Common myeloid progenitor, CD34-positive (primary cell): ENCODE measurements at regions of chr1 and their contacts with region 1.

Region 1: GRCh38 chr1:180482425-180483275 is 19.7 kb downstream of the ACBD6 start:
- DNase-seq: peak; percentile 54 to 77 (median 66)
- H3K4me3 ChIP-seq: peak overlapping the region in 2 of 7 experiments; percentile 8 to 14
- H3K27ac ChIP-seq: peak overlapping the region in 1 of 2 experiments; percentile 34
- H3K4me1 ChIP-seq: peaks cover 0 to 3% (median 1%) of the 10 kb centered on the region in 4 experiments
- H3K27me3 ChIP-seq: no peaks in the 10 kb centered on the region

Region 2: DNA sequence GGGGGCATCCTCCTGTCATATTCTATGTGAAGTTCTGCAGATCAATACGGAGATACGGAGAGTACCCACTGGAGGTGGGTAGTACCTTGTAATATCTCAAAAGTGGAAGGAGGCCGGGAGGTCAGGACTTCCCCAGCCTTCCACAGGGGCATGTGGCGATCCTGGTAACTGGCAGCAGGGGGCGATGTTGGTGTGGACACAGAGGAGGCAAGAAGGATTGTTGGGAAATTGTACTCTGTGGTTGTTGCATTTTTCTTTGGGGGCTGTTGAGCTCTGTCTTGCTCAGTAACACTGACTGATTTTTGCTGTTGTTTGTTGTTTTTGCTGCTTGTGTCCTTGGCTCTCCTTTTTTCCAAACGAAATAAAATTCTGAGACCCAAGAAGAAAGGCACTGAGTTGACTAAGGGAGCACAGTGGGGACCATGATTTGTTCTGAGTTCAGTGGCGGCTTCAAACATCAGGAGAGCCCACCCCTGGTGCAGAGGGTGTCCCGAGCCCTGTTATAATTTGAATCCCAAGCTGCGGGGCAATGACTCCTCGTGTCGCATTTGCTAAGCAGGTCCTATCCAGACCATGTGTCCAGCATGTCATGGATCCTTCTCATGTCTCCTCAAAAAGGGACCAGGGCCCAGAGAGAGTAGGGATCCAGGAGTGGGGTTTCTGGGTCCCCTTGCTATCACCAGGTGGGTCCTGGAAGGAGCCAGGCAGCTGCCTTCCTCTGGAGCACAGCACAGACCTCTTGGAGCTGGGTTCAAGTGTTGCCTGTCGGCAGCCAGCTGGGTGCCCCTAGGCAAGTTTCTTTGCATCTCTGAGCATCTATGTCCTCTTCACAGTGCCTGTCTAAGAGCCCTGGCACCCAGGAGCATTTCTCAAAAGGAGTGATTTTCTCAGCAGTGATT is 229.8 kb before region 1 on chr1:
- CTCF ChIA-PET with region 1: interaction called, 21 read pairs
- POLR2A ChIA-PET with region 1: no interaction called
- DNase-seq: peak; percentile 59 to 80 (median 75)
- H3K4me3 ChIP-seq: no peak overlapping the region
- H3K27ac ChIP-seq: no peak overlapping the region
- H3K4me1 ChIP-seq: no peaks in the 10 kb centered on the region
- H3K27me3 ChIP-seq: peaks cover 0 to 7% (median 0%) of the 10 kb centered on the region in 5 experiments

Region 3: DNA sequence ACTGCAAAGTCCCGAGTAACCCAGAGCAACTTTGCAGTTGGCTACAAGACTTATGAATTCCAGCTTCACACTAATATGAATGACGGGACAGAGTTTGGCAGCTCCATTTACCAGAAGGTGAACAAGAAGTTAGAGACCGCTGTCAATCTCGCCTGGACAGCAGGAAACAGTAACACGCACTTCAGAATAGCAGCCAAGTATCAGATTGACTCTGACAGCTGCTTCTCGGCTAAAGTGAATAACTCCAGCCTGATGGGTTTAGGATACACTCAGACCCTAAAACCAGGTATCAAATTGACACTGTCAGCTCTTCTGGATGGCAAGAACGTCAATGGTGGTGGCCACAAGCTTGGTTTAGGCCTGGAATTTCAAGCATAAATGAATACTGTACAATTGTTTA is 47.1 kb before region 1 on chr1:
- CTCF ChIA-PET with region 1: no interaction called
- POLR2A ChIA-PET with region 1: no interaction called
- DNase-seq: no peak
- H3K4me3 ChIP-seq: no peak overlapping the region
- H3K27ac ChIP-seq: no peak overlapping the region
- H3K4me1 ChIP-seq: no peaks in the 10 kb centered on the region
- H3K27me3 ChIP-seq: no peaks in the 10 kb centered on the region

Region 4: GRCh38 chr1:180494370-180494769 is 11.7 kb after region 1 on chr1:
- CTCF ChIA-PET with region 1: interaction called, 11 read pairs
- POLR2A ChIA-PET with region 1: no interaction called
- DNase-seq: peak; percentile 38 to 86 (median 80)
- H3K4me3 ChIP-seq: peak overlapping the region in 1 of 7 experiments; percentile 15
- H3K27ac ChIP-seq: no peak overlapping the region
- H3K4me1 ChIP-seq: peaks cover 0 to 10% (median 5%) of the 10 kb centered on the region in 4 experiments
- H3K27me3 ChIP-seq: no peaks in the 10 kb centered on the region

Region 5: DNA sequence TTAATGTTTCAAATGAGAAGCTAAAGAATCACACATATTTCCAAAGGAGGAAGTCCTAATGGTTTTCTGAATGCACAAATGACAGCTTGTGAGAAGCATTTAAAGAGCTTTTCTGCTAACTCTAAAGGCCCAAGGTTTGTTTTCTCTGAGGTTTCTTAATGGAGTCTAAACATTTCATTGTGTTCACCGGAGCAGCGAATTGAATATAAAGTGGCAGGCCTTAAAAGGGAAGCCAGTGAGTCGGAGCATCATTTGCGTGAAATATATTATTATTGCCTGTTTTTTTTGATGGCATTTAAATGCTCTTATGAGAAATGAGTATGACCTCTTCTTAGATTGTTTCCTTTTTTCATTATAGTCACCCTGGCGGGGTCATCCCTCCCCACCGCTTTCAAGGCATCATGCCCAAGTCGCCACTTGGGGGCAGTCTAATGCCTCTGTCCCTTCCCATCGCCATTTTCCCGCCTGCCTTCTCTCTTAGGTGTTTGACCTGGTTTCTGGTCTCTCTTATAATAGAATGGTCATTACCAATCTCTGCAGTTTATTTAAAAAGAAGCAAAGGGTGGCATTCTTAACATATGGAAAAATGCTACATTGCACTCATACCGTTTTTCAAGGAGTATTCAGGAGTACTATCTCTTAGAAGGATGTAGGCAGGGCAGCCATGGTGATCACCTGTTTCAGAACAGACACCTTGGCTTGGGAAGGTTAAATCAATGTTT is 50.8 kb after region 1 on chr1:
- CTCF ChIA-PET with region 1: no interaction called
- POLR2A ChIA-PET with region 1: no interaction called
- DNase-seq: peak; percentile 50 to 76 (median 71)
- H3K4me3 ChIP-seq: no peak overlapping the region
- H3K27ac ChIP-seq: no peak overlapping the region
- H3K4me1 ChIP-seq: no peaks in the 10 kb centered on the region
- H3K27me3 ChIP-seq: no peaks in the 10 kb centered on the region